Left ventricle myocardium inferior (tissue), 1 donor: ENCODE measurements at regions of chr13 and their contacts with region 1.

Region 1: DNA sequence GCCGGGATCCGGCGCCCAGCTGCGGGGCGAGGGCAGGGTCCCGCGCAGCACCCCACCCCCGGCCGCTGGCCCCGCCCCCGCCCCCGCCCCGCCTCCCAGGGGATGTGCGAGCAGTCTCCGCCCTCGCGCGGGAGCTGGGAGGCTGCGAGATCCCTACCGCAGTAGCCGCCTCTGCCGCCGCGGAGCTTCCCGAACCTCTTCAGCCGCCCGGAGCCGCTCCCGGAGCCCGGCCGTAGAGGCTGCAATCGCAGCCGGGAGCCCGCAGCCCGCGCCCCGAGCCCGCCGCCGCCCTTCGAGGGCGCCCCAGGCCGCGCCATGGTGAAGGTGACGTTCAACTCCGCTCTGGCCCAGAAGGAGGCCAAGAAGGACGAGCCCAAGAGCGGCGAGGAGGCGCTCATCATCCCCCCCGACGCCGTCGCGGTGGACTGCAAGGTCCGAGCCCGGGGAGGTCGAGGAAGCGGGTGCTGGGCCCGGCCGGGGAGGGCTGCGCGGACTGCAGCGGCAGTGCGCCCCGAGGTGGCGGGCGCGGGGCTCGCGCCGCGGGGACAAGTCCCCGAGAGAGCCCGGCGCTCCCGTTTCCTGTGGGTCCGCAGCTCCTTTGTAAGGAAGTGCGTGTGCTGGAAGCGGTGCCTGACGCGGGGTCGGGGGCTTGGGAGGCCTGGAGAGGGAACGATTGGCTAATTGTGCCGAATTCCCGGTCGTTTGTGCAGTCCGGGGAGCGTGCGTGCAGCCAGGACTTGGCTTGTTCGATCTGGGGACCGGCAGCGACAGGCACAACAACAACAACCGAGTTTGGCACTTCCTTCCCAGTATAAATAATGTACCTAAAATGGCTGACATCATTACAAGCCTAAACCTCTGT is at the start of gene ITM2B:
- DNase-seq: peak; percentile 84
- H3K4me3 ChIP-seq: peak within 1 kb of the TSS; percentile 100
- H3K27ac ChIP-seq: peak within 1 kb of the TSS; percentile 100
- H3K4me1 ChIP-seq: peaks cover 70% of the 10 kb centered on the region
- H3K27me3 ChIP-seq: no peaks in the 10 kb centered on the region
- CTCF ChIP-seq: peak; percentile 62
- total RNA-seq, gene ITM2B: 533 TPM

Region 2: GRCh38 chr13:47004027-47004426 is 1229.2 kb before region 1 on chr13:
- intact Hi-C with region 1: no loop called
- DNase-seq: no peak
- H3K4me3 ChIP-seq: no peak overlapping the region
- H3K27ac ChIP-seq: no peak overlapping the region
- H3K4me1 ChIP-seq: no peaks in the 10 kb centered on the region
- H3K27me3 ChIP-seq: peaks cover 17% of the 10 kb centered on the region
- CTCF ChIP-seq: no peak

Region 3: DNA sequence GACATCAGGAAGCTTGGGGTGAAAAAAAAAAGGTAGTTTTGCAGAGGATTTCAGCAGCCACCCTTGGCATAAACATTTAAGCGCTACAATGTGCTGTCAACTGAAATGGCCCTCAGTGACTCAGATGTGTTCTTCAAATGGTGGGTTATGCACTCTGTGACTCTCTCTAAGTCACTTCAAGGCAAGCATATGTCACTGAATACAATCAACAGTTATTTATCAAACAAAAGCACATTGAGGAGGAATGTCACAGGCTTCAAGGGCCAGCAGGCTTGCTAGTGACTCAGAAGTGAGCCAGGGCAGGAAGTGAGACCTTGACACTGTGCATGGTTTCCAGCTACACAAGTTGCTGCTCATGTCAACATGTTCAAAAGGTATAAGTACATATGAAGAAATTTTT is 812.7 kb before region 1 on chr13:
- intact Hi-C with region 1: no loop called
- DNase-seq: no peak
- H3K4me3 ChIP-seq: no peak overlapping the region
- H3K27ac ChIP-seq: no peak overlapping the region
- H3K4me1 ChIP-seq: peaks cover 8% of the 10 kb centered on the region
- H3K27me3 ChIP-seq: no peaks in the 10 kb centered on the region
- CTCF ChIP-seq: no peak

Region 4: GRCh38 chr13:48126944-48127830 is 106.1 kb before region 1 on chr13:
- intact Hi-C with region 1: loop called (anchors 10 kb)
- DNase-seq: peak; percentile 84
- H3K4me3 ChIP-seq: no peak overlapping the region
- H3K27ac ChIP-seq: peak overlapping the region; percentile 91
- H3K4me1 ChIP-seq: peaks cover 55% of the 10 kb centered on the region
- H3K27me3 ChIP-seq: no peaks in the 10 kb centered on the region
- CTCF ChIP-seq: peak; percentile 81

Region 5: DNA sequence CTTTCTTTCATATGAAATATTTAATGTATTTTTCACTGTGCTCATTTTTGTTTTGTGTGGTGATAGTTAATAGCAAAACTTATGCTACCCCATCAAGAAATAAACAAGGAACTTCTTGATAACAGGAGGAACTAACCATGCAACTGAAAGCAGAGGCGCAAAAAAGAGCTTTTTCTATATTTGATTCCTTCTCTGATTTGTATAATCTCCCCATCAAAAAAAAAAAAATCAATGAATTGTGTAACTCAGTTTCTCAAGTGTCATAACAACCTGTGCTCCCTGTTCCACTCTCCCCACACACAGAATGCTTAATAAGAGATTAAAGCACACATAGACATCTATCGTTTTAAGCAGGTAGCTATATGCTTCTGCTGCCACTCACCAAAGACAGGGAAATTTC is 71.1 kb before region 1 on chr13:
- intact Hi-C with region 1: no loop called
- DNase-seq: no peak
- H3K4me3 ChIP-seq: no peak overlapping the region
- H3K27ac ChIP-seq: peak overlapping the region; percentile 78
- H3K4me1 ChIP-seq: peaks cover 20% of the 10 kb centered on the region
- H3K27me3 ChIP-seq: no peaks in the 10 kb centered on the region
- CTCF ChIP-seq: no peak

Region 6: GRCh38 chr13:48303359-48304142 is 70.3 kb after region 1 on chr13 and contains the start of gene RB1:
- intact Hi-C with region 1: loop called (anchors 10 kb)
- DNase-seq: peak; percentile 94
- H3K4me3 ChIP-seq: peak within 1 kb of the TSS; percentile 96
- H3K27ac ChIP-seq: peak within 1 kb of the TSS; percentile 100
- H3K4me1 ChIP-seq: peaks cover 49% of the 10 kb centered on the region
- H3K27me3 ChIP-seq: no peaks in the 10 kb centered on the region
- CTCF ChIP-seq: no peak
- total RNA-seq, gene RB1: 23.8 TPM